IMR-90 (cell line): ENCODE measurements at regions of chr16 and their contacts with region 1.

Region 1: GRCh38 chr16:26453215-26453614 is 613.5 kb upstream of the C16orf82 start:
- DNase-seq: no peak
- ATAC-seq: no peak
- H3K4me3 ChIP-seq: no peak overlapping the region
- H3K27ac ChIP-seq: no peak overlapping the region
- H3K4me1 ChIP-seq: no peaks in the 10 kb centered on the region
- H3K27me3 ChIP-seq: no peaks in the 10 kb centered on the region
- CTCF ChIP-seq: no peak
- POLR2A ChIP-seq: no peak
- RAD21 ChIP-seq: no peak

Region 2: GRCh38 chr16:26511463-26511862 is 58.2 kb after region 1 on chr16:
- CTCF ChIA-PET with region 1: no interaction called
- POLR2A ChIA-PET with region 1: no interaction called
- dilution Hi-C with region 1: no loop called
- in situ Hi-C with region 1: loop called (anchors 10 kb)
- intact Hi-C with region 1: no loop called
- DNase-seq: no peak
- ATAC-seq: no peak
- H3K4me3 ChIP-seq: no peak overlapping the region
- H3K27ac ChIP-seq: no peak overlapping the region
- H3K4me1 ChIP-seq: no peaks in the 10 kb centered on the region
- H3K27me3 ChIP-seq: no peaks in the 10 kb centered on the region
- CTCF ChIP-seq: no peak
- POLR2A ChIP-seq: no peak
- RAD21 ChIP-seq: no peak